B cell (primary cell): ENCODE measurements at regions of chr5 and their contacts with region 1.

Region 1: GRCh38 chr5:150458819-150459557 is 9.4 kb upstream of the RPS14 start:
- DNase-seq: peak; percentile 86
- ATAC-seq: peak; percentile 92
- H3K4me3 ChIP-seq: peak overlapping the region in 1 of 5 experiments; percentile 17
- H3K4me3 Mint-ChIP-seq: peak overlapping the region; percentile 32
- H3K27ac ChIP-seq: no peak overlapping the region
- H3K27ac Mint-ChIP-seq: peak overlapping the region; percentile 63
- H3K4me1 ChIP-seq: peaks cover 31 to 44% of the 10 kb centered on the region in 2 donors
- H3K4me1 Mint-ChIP-seq: peaks cover 39% of the 10 kb centered on the region
- H3K27me3 ChIP-seq: no peaks in the 10 kb centered on the region
- H3K27me3 Mint-ChIP-seq: no peaks in the 10 kb centered on the region
- CTCF ChIP-seq: peak; percentile 81

Region 2: GRCh38 chr5:150357326-150358260 is 101.4 kb before region 1 on chr5 and contains the start of gene TCOF1:
- CTCF ChIA-PET with region 1: no interaction called
- POLR2A ChIA-PET with region 1: interaction called, 12 read pairs
- intact Hi-C with region 1: no loop called
- DNase-seq: peak; percentile 97
- ATAC-seq: peak; percentile 99
- H3K4me3 ChIP-seq: peak within 1 kb of the TSS; percentile 53 to 77 (median 69)
- H3K4me3 Mint-ChIP-seq: peak within 1 kb of the TSS; percentile 90
- H3K27ac ChIP-seq: peak within 1 kb of the TSS; percentile 23 to 68
- H3K27ac Mint-ChIP-seq: peak within 1 kb of the TSS; percentile 88
- H3K4me1 ChIP-seq: peaks cover 35 to 54% of the 10 kb centered on the region in 2 donors
- H3K4me1 Mint-ChIP-seq: peaks cover 50% of the 10 kb centered on the region
- H3K27me3 ChIP-seq: no peaks in the 10 kb centered on the region
- H3K27me3 Mint-ChIP-seq: no peaks in the 10 kb centered on the region
- CTCF ChIP-seq: no peak
- total RNA-seq, gene TCOF1: 62.4 and 66.5 TPM in 2 replicates

Region 3: GRCh38 chr5:150486402-150487198 is 27.6 kb after region 1 on chr5:
- CTCF ChIA-PET with region 1: interaction called, 11 read pairs
- POLR2A ChIA-PET with region 1: interaction called, 6 read pairs
- intact Hi-C with region 1: loop called (anchors 1 kb)
- DNase-seq: peak; percentile 86
- ATAC-seq: peak; percentile 46
- H3K4me3 ChIP-seq: peak overlapping the region; percentile 59 to 91 (median 71)
- H3K4me3 Mint-ChIP-seq: peak overlapping the region; percentile 82
- H3K27ac ChIP-seq: peak overlapping the region; percentile 72 to 73
- H3K27ac Mint-ChIP-seq: peak overlapping the region; percentile 85
- H3K4me1 ChIP-seq: peaks cover 39 to 58% of the 10 kb centered on the region in 2 donors
- H3K4me1 Mint-ChIP-seq: peaks cover 51% of the 10 kb centered on the region
- H3K27me3 ChIP-seq: no peaks in the 10 kb centered on the region
- H3K27me3 Mint-ChIP-seq: no peaks in the 10 kb centered on the region
- CTCF ChIP-seq: no peak

Region 4: DNA sequence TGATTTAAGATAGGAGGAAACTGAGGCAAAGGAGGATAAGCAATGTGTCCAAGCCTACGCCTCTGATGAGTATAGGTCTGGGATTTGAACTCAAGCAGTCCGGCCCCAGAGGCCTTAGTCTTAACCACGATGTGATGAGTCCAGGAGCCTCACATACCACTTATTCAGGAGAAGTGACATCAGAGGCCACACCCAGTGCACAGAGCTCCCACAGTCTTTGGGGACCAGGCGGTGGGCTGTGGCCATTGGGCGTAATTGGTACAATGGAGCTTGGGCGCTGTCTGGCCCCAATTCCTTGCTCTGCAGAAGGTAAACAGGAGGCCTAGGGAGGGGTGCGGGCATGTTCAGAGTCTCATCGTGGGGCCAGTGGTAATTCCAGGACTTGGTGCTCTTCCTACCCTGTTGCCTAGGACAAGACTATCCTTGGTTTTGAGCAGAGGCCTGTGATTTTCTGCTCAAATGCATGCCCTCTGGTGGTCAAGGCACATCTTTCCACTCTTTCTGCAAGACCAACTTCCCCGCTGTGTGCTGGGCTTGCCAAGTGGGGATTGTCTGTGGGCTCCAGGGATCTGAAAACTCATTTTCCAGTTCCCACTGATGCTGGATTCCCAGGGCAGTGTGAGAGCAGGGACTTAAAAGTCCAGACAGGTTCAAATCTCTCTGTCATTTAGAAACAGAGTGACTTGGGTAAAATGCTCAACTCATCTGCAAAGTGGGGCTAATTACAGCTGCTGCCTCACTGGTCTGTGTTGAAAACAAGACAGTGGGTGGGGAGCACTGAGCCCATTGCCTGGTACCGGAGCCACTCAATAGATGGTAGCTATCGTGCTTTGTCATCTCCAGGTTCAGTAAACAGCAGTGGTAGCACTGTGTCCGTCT is 64.7 kb after region 1 on chr5:
- CTCF ChIA-PET with region 1: interaction called, 126 read pairs
- POLR2A ChIA-PET with region 1: interaction called, 3 read pairs
- intact Hi-C with region 1: no loop called
- DNase-seq: peak; percentile 66
- ATAC-seq: no peak
- H3K4me3 ChIP-seq: no peak overlapping the region
- H3K4me3 Mint-ChIP-seq: no peak overlapping the region
- H3K27ac ChIP-seq: no peak overlapping the region
- H3K27ac Mint-ChIP-seq: no peak overlapping the region
- H3K4me1 ChIP-seq: no peaks in the 10 kb centered on the region
- H3K4me1 Mint-ChIP-seq: no peaks in the 10 kb centered on the region
- H3K27me3 ChIP-seq: no peaks in the 10 kb centered on the region
- H3K27me3 Mint-ChIP-seq: no peaks in the 10 kb centered on the region
- CTCF ChIP-seq: peak; percentile 68

Region 5: GRCh38 chr5:150544611-150545219 is 85.7 kb after region 1 on chr5:
- CTCF ChIA-PET with region 1: interaction called, 76 read pairs
- POLR2A ChIA-PET with region 1: no interaction called
- intact Hi-C with region 1: loop called (anchors 1 kb)
- DNase-seq: peak; percentile 77
- ATAC-seq: peak; percentile 99
- H3K4me3 ChIP-seq: no peak overlapping the region
- H3K4me3 Mint-ChIP-seq: no peak overlapping the region
- H3K27ac ChIP-seq: no peak overlapping the region
- H3K27ac Mint-ChIP-seq: no peak overlapping the region
- H3K4me1 ChIP-seq: peaks cover 0 to 4% of the 10 kb centered on the region in 2 donors
- H3K4me1 Mint-ChIP-seq: peaks cover 1% of the 10 kb centered on the region
- H3K27me3 ChIP-seq: no peaks in the 10 kb centered on the region
- H3K27me3 Mint-ChIP-seq: no peaks in the 10 kb centered on the region
- CTCF ChIP-seq: peak; percentile 80

Region 6: GRCh38 chr5:150656191-150657132 is 197.5 kb after region 1 on chr5:
- CTCF ChIA-PET with region 1: interaction called, 11 read pairs
- POLR2A ChIA-PET with region 1: no interaction called
- intact Hi-C with region 1: loop called (anchors 2 kb)
- DNase-seq: peak; percentile 89
- ATAC-seq: peak; percentile 91
- H3K4me3 ChIP-seq: peak overlapping the region; percentile 21 to 69 (median 59)
- H3K4me3 Mint-ChIP-seq: peak overlapping the region; percentile 81
- H3K27ac ChIP-seq: no peak overlapping the region
- H3K27ac Mint-ChIP-seq: peak overlapping the region; percentile 84
- H3K4me1 ChIP-seq: peaks cover 10 to 15% of the 10 kb centered on the region in 2 donors
- H3K4me1 Mint-ChIP-seq: peaks cover 19% of the 10 kb centered on the region
- H3K27me3 ChIP-seq: no peaks in the 10 kb centered on the region
- H3K27me3 Mint-ChIP-seq: peaks cover 4% of the 10 kb centered on the region
- CTCF ChIP-seq: peak; percentile 77

Region 7: GRCh38 chr5:150846654-150847333 is 387.8 kb after region 1 on chr5:
- CTCF ChIA-PET with region 1: interaction called, 10 read pairs
- POLR2A ChIA-PET with region 1: no interaction called
- intact Hi-C with region 1: no loop called
- DNase-seq: peak; percentile 84
- ATAC-seq: peak; percentile 97
- H3K4me3 ChIP-seq: peak overlapping the region; percentile 31 to 58 (median 45)
- H3K4me3 Mint-ChIP-seq: peak overlapping the region; percentile 84
- H3K27ac ChIP-seq: no peak overlapping the region
- H3K27ac Mint-ChIP-seq: peak overlapping the region; percentile 54
- H3K4me1 ChIP-seq: peaks cover 4 to 11% of the 10 kb centered on the region in 2 donors
- H3K4me1 Mint-ChIP-seq: peaks cover 8% of the 10 kb centered on the region
- H3K27me3 ChIP-seq: no peaks in the 10 kb centered on the region
- H3K27me3 Mint-ChIP-seq: peaks cover 4% of the 10 kb centered on the region
- CTCF ChIP-seq: peak; percentile 79